ENCODE measurements at regions of chr16 and their contacts with region 1.

Region 1: DNA sequence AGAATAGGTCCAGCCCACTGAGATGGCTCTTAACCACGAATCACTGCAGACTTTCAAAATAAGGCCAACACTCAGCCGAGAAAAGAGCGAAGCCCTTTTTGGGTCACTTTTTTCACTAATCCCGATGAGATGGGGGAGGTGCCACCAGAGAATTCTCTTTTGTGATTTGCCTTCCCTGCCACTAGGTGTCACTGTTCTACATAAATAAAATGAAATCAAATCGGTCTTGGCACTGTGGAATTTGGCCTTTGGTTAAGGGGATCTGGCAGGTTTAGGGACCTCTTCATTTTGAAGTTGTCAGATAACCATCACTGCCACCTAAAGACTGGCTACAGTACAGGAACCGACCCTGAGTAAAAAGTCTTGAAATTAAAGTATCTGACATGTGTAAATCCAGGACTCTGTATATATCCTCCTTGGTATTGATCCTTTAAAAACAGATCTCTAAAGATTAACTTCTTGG is 147.0 kb downstream of the HS3ST4 start:
- DNase-seq: peak; percentile 41
- ATAC-seq: peak; percentile 68
- H3K4me3 ChIP-seq: no peak overlapping the region
- H3K27ac ChIP-seq: no peak overlapping the region
- H3K4me1 ChIP-seq: no peaks in the 10 kb centered on the region
- H3K27me3 ChIP-seq: no peaks in the 10 kb centered on the region
- CTCF ChIP-seq: peak; percentile 75
- POLR2A ChIP-seq: no peak
- RAD21 ChIP-seq: peak; percentile 58

Region 2: DNA sequence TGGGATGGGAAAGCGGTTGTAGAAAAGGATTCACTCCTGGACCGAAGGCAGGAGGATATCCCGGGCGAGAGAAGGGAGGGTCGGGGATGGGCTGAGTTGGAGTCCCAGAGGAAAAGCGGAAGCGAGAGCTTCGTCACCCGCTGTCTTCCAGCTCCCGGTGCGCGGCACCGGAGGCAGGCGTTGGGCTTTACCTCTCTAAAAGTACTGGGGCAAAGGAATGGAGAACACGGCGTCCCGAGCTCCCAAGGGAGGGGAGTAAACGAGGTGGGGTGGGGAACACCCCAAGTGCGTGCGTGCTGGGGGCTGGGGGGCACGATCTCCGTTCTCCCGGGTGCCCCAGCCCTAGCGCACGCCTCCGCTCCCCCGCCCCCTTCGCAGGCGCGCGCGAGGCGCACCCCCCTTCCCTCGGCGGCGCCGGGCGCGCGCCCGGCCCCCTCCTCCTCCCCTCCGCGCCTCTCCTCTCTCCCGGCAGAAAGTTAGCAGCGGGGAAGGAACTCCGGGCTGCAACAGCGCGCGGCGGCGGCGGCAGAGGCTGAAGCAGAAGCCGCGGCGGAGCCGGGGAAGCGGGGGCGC is 147.2 kb before region 1 on chr16 and contains the start of gene HS3ST4:
- CTCF ChIA-PET with region 1: no interaction called
- POLR2A ChIA-PET with region 1: no interaction called
- dilution Hi-C with region 1: no loop called
- in situ Hi-C with region 1: no loop called
- intact Hi-C with region 1: no loop called
- DNase-seq: no peak
- ATAC-seq: no peak
- H3K4me3 ChIP-seq: no peak within 1 kb of the TSS
- H3K27ac ChIP-seq: no peak within 1 kb of the TSS
- H3K4me1 ChIP-seq: no peaks in the 10 kb centered on the region
- H3K27me3 ChIP-seq: peaks cover 12% of the 10 kb centered on the region
- CTCF ChIP-seq: no peak
- POLR2A ChIP-seq: no peak
- RAD21 ChIP-seq: no peak
- total RNA-seq, gene HS3ST4: not detected in 2 replicates

Region 3: DNA sequence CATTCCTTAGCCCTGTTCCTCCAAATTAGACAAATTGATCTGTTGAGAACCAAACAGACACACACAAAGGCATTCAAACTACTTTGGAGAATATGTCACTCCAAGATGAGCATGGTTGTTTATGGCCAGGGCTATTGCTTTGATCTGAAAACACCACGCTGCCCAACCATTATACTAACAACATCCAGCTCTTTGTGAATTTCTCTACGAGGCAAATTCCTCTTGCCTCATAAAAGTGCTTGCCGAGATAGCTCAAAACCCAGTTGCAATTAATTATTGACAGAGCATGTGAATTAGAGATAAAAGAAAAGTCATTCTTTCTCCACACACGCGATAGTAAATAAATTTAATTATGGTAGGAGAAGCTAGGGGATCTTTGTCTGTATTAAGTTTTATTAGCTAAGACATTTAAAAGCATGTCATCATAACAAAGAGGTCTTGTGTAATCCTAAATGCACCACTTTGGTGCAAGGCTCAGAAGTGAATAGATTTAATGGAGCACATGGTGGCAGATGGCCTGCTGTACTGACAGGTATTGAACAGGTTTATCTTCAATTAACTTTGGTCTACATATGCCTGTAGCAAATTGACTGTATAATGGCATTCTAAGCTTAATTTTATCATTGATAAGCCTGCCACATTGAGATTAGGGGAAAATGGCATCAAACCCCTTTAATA is 294.8 kb after region 1 on chr16:
- CTCF ChIA-PET with region 1: no interaction called
- POLR2A ChIA-PET with region 1: no interaction called
- dilution Hi-C with region 1: no loop called
- in situ Hi-C with region 1: no loop called
- intact Hi-C with region 1: no loop called
- DNase-seq: no peak
- ATAC-seq: no peak
- H3K4me3 ChIP-seq: no peak overlapping the region
- H3K27ac ChIP-seq: no peak overlapping the region
- H3K4me1 ChIP-seq: no peaks in the 10 kb centered on the region
- H3K27me3 ChIP-seq: no peaks in the 10 kb centered on the region
- CTCF ChIP-seq: no peak
- POLR2A ChIP-seq: no peak
- RAD21 ChIP-seq: no peak

Region 4: GRCh38 chr16:27374804-27375425 is 1536.2 kb after region 1 on chr16:
- CTCF ChIA-PET with region 1: no interaction called
- POLR2A ChIA-PET with region 1: no interaction called
- dilution Hi-C with region 1: no loop called
- in situ Hi-C with region 1: loop called (anchors 25 kb)
- intact Hi-C with region 1: no loop called
- DNase-seq: peak; percentile 80
- ATAC-seq: peak; percentile 93
- H3K4me3 ChIP-seq: no peak overlapping the region
- H3K27ac ChIP-seq: no peak overlapping the region
- H3K4me1 ChIP-seq: peaks cover 11% of the 10 kb centered on the region
- H3K27me3 ChIP-seq: no peaks in the 10 kb centered on the region
- CTCF ChIP-seq: peak; percentile 59
- POLR2A ChIP-seq: no peak
- RAD21 ChIP-seq: peak; percentile 62

Measured in IMR-90 (cell line).